ENCODE measurements at regions of chr4 and their contacts with region 1.

Region 1: DNA sequence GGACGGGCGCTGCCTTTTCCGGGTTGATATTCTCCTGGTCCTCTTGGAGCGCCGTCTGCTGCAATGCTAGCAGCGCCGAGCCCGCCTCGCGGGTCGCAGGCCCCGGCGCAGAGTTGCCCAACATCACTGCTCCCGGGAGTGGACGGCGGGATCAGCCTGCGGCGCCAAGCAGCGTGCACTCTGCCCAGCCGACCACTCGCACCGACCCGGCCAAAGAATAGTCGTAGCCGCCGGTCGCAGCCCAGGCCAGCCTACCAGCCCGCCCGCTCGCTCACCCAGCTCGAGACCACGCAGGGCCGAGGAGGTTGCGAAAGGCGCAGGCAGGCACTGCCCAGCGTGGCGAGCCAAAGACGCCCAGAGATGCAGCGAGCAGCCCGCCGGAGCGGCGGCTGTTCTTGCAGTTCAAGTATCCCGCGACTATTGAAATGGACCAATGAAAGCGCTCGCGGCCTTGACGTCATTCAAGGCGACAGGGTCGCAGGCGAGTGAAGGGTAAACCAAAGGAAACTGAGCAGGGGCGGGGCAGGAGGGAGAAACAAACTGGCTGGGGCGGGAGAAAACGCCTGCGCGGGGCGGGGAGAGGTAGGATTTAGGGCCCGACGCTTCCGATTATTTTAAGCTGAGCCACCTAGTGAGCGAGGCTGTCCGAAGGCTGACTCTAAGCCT is at the start of gene CCNA2:
- DNase-seq: peak; percentile 95 to 97
- H3K4me3 ChIP-seq: peak within 1 kb of the TSS; percentile 63
- H3K4me3 Mint-ChIP-seq: peak within 1 kb of the TSS; percentile 96
- H3K27ac Mint-ChIP-seq: peak within 1 kb of the TSS; percentile 94
- H3K4me1 ChIP-seq: peaks cover 8% of the 10 kb centered on the region
- H3K4me1 Mint-ChIP-seq: no peaks in the 10 kb centered on the region
- H3K27me3 ChIP-seq: no peaks in the 10 kb centered on the region
- H3K27me3 Mint-ChIP-seq: no peaks in the 10 kb centered on the region
- CTCF ChIP-seq: no peak
- total RNA-seq, gene CCNA2: 88.3 and 97.9 TPM in 2 replicates

Region 2: GRCh38 chr4:121842862-121843261 is 19.2 kb after region 1 on chr4:
- CTCF ChIA-PET with region 1: no interaction called
- POLR2A ChIA-PET with region 1: no interaction called
- intact Hi-C with region 1: no loop called
- DNase-seq: no peak
- H3K4me3 ChIP-seq: no peak overlapping the region
- H3K4me3 Mint-ChIP-seq: no peak overlapping the region
- H3K27ac Mint-ChIP-seq: no peak overlapping the region
- H3K4me1 ChIP-seq: no peaks in the 10 kb centered on the region
- H3K4me1 Mint-ChIP-seq: no peaks in the 10 kb centered on the region
- H3K27me3 ChIP-seq: no peaks in the 10 kb centered on the region
- H3K27me3 Mint-ChIP-seq: no peaks in the 10 kb centered on the region
- CTCF ChIP-seq: no peak

Region 3: GRCh38 chr4:121863799-121864198 is 40.2 kb after region 1 on chr4:
- CTCF ChIA-PET with region 1: no interaction called
- POLR2A ChIA-PET with region 1: no interaction called
- intact Hi-C with region 1: loop called (anchors 2 kb)
- DNase-seq: no peak
- H3K4me3 ChIP-seq: no peak overlapping the region
- H3K4me3 Mint-ChIP-seq: no peak overlapping the region
- H3K27ac Mint-ChIP-seq: no peak overlapping the region
- H3K4me1 ChIP-seq: no peaks in the 10 kb centered on the region
- H3K4me1 Mint-ChIP-seq: peaks cover 3% of the 10 kb centered on the region
- H3K27me3 ChIP-seq: no peaks in the 10 kb centered on the region
- H3K27me3 Mint-ChIP-seq: no peaks in the 10 kb centered on the region
- CTCF ChIP-seq: no peak

Region 4: DNA sequence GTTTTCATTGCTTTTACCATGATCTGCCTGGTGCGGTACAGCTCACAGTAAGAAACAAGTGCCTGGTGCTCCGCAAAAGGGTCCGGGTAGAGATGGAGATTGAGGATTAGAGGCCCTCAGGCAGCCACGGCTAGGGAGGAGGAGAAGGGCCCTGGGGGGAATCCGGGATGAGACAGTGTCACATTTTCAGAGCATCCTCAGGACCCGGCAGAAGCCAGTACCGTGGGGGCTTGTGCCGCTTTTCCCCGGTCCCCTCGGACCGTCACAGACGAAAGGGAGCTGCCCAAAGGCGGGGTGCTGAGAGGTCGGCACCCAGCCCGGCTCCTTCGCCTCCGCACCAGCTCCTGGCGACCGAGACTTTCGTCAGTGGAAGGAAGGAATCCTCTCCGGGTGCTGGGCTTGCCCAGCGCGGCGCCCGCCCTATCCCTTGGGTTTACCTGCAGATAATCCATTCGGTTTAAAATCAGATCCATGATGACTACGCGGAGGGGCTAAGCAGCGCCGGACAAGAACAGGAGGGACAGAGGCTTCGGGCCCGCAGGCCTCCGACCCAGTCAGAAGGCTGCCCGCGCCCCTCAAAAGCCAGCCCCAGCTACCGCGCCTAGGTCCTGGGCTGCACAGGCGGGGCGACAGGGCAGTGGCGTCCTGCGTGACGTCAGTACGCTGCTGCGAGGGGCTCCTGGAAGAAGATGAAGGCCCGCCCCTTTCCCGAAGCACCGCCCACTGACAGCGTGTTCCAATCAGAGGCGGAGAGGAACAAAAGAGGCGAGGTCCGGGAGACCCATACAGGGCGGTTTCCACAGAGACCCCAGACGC is 46.4 kb after region 1 on chr4 and contains the start of gene BBS7:
- CTCF ChIA-PET with region 1: no interaction called
- POLR2A ChIA-PET with region 1: no interaction called
- intact Hi-C with region 1: loop called (anchors 1 kb)
- DNase-seq: peak; percentile 96 to 98
- H3K4me3 ChIP-seq: peak within 1 kb of the TSS; percentile 77
- H3K4me3 Mint-ChIP-seq: peak within 1 kb of the TSS; percentile 97
- H3K27ac Mint-ChIP-seq: peak within 1 kb of the TSS; percentile 93
- H3K4me1 ChIP-seq: 0 out of 2 replicates have a peak, but pooled peaks cover 7% of the 10 kb centered on the region
- H3K4me1 Mint-ChIP-seq: peaks cover 8% of the 10 kb centered on the region
- H3K27me3 ChIP-seq: no peaks in the 10 kb centered on the region
- H3K27me3 Mint-ChIP-seq: no peaks in the 10 kb centered on the region
- CTCF ChIP-seq: no peak
- total RNA-seq, gene BBS7: 17.1 and 19.9 TPM in 2 replicates

Region 5: GRCh38 chr4:122003335-122003734 is 179.7 kb after region 1 on chr4:
- CTCF ChIA-PET with region 1: no interaction called
- POLR2A ChIA-PET with region 1: no interaction called
- intact Hi-C with region 1: no loop called
- DNase-seq: peak; percentile 83 to 87
- H3K4me3 ChIP-seq: no peak overlapping the region
- H3K4me3 Mint-ChIP-seq: peak overlapping the region; percentile 64
- H3K27ac Mint-ChIP-seq: peak overlapping the region; percentile 42
- H3K4me1 ChIP-seq: peaks cover 7% of the 10 kb centered on the region
- H3K4me1 Mint-ChIP-seq: peaks cover 7% of the 10 kb centered on the region
- H3K27me3 ChIP-seq: no peaks in the 10 kb centered on the region
- H3K27me3 Mint-ChIP-seq: peaks cover 3% of the 10 kb centered on the region
- CTCF ChIP-seq: peak; percentile 55 to 59

Region 6: GRCh38 chr4:123325241-123325681 is 1501.6 kb after region 1 on chr4:
- CTCF ChIA-PET with region 1: no interaction called
- POLR2A ChIA-PET with region 1: no interaction called
- intact Hi-C with region 1: no loop called
- DNase-seq: no peak
- H3K4me3 ChIP-seq: no peak overlapping the region
- H3K4me3 Mint-ChIP-seq: no peak overlapping the region
- H3K27ac Mint-ChIP-seq: no peak overlapping the region
- H3K4me1 ChIP-seq: no peaks in the 10 kb centered on the region
- H3K4me1 Mint-ChIP-seq: no peaks in the 10 kb centered on the region
- H3K27me3 ChIP-seq: no peaks in the 10 kb centered on the region; the same call in 1 of the 2 replicates
- H3K27me3 Mint-ChIP-seq: no peaks in the 10 kb centered on the region
- CTCF ChIP-seq: no peak

Measured in Caco-2 (cell line).